ENCODE measurements at regions of chr11 and their contacts with region 1.

Region 1: DNA sequence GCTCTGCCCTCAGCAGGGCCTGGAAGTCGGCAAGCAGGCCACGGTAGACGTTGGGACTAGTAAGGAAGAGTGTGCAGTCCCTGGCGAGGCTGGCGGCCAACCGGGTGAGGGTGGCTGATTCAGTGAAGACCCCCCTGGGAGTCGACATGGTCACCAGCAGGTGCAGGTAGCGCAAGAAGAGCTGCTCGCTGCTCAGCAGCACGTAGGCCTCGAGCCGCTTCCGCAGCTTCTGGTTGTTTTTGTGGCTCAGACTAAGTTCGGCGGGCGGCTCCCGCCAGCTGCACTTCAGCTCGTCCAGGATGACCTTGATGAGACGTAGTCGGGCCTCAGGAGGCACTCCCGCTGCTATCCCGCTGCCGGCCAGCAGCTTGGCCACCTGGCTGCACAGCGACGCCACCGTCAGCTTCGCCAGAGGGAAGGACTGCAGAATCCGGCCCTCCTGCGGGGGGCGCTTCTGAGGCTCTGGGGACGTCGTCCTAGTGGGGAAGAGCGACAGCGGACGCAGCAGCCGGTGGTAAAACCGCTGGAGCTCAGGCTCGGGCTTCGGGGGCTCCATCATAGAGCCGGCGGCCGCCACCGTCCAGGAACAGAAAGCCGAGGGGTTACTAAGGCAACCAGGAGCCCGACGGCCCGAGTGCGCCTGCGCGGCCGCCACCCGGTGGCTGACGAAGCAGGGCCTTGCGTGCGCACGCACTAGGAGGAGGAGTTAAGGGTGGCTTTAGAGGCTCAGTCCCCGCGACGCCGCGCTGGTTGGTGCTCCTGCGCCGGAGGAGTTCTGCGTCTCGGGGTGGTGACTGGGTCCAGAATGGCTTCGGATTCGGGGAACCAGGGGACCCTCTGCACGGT is at the starts of genes CCDC87 and CCS:
- DNase-seq: peak; percentile 85 to 98
- H3K4me3 ChIP-seq: peak within 1 kb of the TSS; percentile 49 to 73 (median 64)
- H3K27ac ChIP-seq: peak within 1 kb of the TSS; percentile 57
- H3K4me1 ChIP-seq: peaks cover 0 to 11% (median 7%) of the 10 kb centered on the region in 4 experiments; a peak in 6 of 7 replicates
- H3K27me3 ChIP-seq: peaks cover 0 to 10% (median 4%) of the 10 kb centered on the region in 4 experiments; a peak in 3 of 7 replicates
- CTCF ChIP-seq: peak; percentile 91 to 99 (median 91)
- EP300 ChIP-seq: 0 out of 3 replicates have a peak, but pooled peaks of 1 of the 2 experiments have one; percentile 14
- POLR2A ChIP-seq: peak; percentile 42 to 79; a peak in 2 of 3 replicates
- RAD21 ChIP-seq: peak; percentile 45 to 68; a peak in 3 of 4 replicates
- total RNA-seq, gene CCDC87: 0.99 and 1.1 TPM in 2 replicates
- total RNA-seq, gene CCS: 35.2 and 37.1 TPM in 2 replicates

Region 2: DNA sequence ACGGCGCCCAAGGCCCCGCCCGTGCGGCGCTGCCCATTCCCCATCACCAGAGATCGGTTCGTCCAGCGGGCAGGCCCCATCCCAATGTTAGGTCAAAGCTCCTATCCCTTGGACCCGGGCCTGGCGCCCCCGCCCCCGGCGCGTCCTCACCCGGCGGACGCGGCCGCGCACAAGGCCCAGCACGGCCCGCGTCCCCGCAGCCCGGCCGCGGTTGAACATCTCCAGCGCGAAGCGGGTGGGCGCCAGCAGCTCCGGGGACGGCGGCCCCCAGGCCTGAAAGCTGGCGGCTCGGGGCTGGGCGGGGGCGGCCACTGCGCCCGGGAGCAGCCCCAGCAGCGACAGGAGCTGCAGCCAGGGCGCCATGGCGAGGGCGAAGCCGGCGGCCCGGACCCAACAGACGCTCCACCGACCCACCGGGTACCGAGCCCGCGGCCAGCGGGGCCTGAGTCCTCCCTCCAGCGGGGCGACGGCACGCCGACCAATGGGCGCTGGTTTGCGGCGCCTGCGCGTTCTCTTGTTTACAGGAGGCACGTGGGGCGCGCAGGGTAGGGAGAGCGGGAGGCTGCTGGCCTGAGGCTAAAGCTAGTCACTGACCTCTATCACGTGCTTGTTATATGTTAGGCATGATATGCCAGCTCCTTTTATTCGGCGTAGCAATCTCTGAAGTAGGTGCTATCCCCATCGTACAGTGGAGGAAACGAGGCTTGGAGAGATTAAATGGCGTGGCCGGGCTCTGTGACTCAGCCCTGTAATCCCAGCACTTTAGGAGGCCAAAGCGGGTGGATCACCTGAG is 24.4 kb before region 1 on chr11 and contains the start of gene CTSF:
- CTCF ChIA-PET with region 1: interaction called, 13 read pairs
- POLR2A ChIA-PET with region 1: interaction called, 10 read pairs
- DNase-seq: no peak
- H3K4me3 ChIP-seq: no peak within 1 kb of the TSS; a peak in 1 of 8 replicates
- H3K27ac ChIP-seq: no peak within 1 kb of the TSS; the same call in 1 of the 2 replicates
- H3K4me1 ChIP-seq: peaks cover 11 to 20% (median 14%) of the 10 kb centered on the region in 4 experiments; a peak in 6 of 7 replicates
- H3K27me3 ChIP-seq: no peaks in the 10 kb centered on the region
- CTCF ChIP-seq: no peak
- EP300 ChIP-seq: no peak
- POLR2A ChIP-seq: no peak
- RAD21 ChIP-seq: no peak
- total RNA-seq, gene CTSF: 0.36 and 0.58 TPM in 2 replicates

Region 3: GRCh38 chr11:66579017-66579606 is 13.6 kb before region 1 on chr11:
- CTCF ChIA-PET with region 1: interaction called, 43 read pairs
- POLR2A ChIA-PET with region 1: interaction called, 17 read pairs
- DNase-seq: peak in 1 of 2 experiments; percentile 97
- H3K4me3 ChIP-seq: no peak overlapping the region
- H3K27ac ChIP-seq: no peak overlapping the region
- H3K4me1 ChIP-seq: peaks cover 0 to 6% (median 4%) of the 10 kb centered on the region in 4 experiments; a peak in 5 of 7 replicates
- H3K27me3 ChIP-seq: peaks cover 0 to 6% (median 1%) of the 10 kb centered on the region in 4 experiments; a peak in 2 of 7 replicates
- CTCF ChIP-seq: peak; percentile 81 to 94 (median 90)
- EP300 ChIP-seq: 0 out of 3 replicates have a peak, but pooled peaks of 1 of the 2 experiments have one; percentile 26
- POLR2A ChIP-seq: no peak
- RAD21 ChIP-seq: peak; percentile 75 to 78

Region 4: GRCh38 chr11:66607126-66607834 is 14.6 kb after region 1 on chr11:
- CTCF ChIA-PET with region 1: interaction called, 15 read pairs
- POLR2A ChIA-PET with region 1: interaction called, 2,165 read pairs
- DNase-seq: no peak
- H3K4me3 ChIP-seq: no peak overlapping the region
- H3K27ac ChIP-seq: no peak overlapping the region
- H3K4me1 ChIP-seq: no peaks in the 10 kb centered on the region
- H3K27me3 ChIP-seq: no peaks in the 10 kb centered on the region
- CTCF ChIP-seq: no peak
- EP300 ChIP-seq: no peak
- POLR2A ChIP-seq: no peak
- RAD21 ChIP-seq: no peak

Region 5: DNA sequence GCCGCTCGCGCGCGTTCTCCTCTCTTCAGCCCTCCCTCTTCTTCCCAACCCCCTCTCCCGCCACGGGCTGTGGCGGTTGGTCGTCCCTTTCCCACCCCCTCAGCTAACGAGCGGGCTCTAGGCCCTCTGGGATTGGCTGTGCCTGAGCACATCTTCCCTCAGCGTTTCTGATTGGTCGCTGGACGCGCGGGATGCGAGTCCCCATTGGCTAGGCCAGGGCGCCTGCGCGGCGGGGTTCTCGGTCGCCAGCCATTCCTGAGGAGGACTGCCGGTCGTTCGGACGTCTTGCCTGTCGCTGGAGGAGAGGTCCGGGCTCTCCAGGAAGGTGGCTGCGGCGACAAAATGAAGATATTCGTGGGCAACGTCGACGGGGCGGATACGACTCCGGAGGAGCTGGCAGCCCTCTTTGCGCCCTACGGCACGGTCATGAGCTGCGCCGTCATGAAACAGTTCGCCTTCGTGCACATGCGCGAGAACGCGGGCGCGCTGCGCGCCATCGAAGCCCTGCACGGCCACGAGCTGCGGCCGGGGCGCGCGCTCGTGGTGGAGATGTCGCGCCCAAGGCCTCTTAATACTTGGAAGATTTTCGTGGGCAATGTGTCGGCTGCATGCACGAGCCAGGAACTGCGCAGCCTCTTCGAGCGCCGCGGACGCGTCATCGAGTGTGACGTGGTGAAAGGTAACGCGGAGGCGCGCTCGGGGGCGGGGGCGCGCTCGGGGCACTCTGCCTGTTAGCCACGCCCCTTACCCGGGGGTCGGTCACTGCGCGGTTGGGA is 23.9 kb after region 1 on chr11 and contains the start of gene RBM14:
- CTCF ChIA-PET with region 1: interaction called, 14 read pairs
- POLR2A ChIA-PET with region 1: interaction called, 2,165 read pairs
- DNase-seq: peak; percentile 96 to 99
- H3K4me3 ChIP-seq: peak within 1 kb of the TSS; percentile 81 to 99 (median 92)
- H3K27ac ChIP-seq: peak within 1 kb of the TSS; percentile 98
- H3K4me1 ChIP-seq: peaks cover 0 to 15% (median 3%) of the 10 kb centered on the region in 4 experiments; a peak in 4 of 7 replicates
- H3K27me3 ChIP-seq: no peaks in the 10 kb centered on the region
- CTCF ChIP-seq: no peak
- EP300 ChIP-seq: no peak
- POLR2A ChIP-seq: peak; percentile 92 to 98
- RAD21 ChIP-seq: no peak
- total RNA-seq, gene RBM14: 142 and 145 TPM in 2 replicates

Region 6: DNA sequence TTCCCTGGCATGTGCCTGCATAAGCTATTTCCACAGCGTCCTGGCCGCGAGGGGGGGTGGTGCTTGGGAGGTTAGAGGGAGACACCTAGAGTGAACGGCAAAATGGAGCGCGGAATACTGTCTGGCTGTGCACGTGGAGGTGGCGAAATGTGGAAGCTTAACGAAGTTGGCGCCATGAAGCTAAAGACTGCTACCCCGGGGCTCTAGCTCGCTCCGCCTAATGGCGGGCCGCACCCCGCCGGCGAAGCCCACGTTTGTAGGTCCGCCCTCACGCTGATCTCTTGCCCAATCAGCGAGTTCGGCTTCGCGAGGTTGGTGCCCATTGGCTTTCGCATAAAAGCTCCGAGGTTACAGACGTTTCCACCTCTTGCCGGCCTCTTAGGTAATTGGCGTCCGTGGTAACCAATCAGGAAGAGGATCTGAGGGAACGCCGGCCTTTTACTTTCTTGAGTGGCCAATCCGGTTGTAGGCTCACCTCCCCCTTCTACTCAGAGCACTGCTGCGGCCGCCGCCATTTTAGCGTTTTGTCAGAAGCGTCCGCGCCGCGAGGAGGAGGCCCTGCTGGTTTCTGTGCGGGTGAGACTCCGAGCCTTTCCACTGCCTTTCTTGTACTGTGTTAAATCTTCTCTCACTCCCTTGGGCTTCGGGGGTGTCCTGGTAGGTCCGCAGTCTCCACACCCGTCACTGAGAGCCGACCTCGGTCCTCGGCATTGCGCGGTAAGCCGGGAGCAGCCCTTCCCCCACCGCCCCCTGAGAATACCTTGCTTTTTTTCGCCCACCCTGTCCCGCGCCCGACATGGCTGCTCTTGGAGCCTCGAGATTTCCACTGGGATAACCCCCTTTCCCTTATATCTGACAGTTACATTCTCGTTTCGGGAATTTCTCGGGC is 45.7 kb after region 1 on chr11 and contains the start of gene RBM4:
- CTCF ChIA-PET with region 1: interaction called, 7 read pairs
- POLR2A ChIA-PET with region 1: interaction called, 2,165 read pairs
- DNase-seq: peak; percentile 94 to 99
- H3K4me3 ChIP-seq: peak within 1 kb of the TSS; percentile 84 to 98 (median 94)
- H3K27ac ChIP-seq: peak within 1 kb of the TSS; percentile 99
- H3K4me1 ChIP-seq: peaks cover 0 to 20% (median 14%) of the 10 kb centered on the region in 4 experiments; a peak in 5 of 7 replicates
- H3K27me3 ChIP-seq: no peaks in the 10 kb centered on the region
- CTCF ChIP-seq: no peak
- EP300 ChIP-seq: 0 out of 3 replicates have a peak, but pooled peaks of 1 of the 2 experiments have one; percentile 21
- POLR2A ChIP-seq: peak; percentile 95 to 99
- RAD21 ChIP-seq: 0 out of 4 replicates have a peak, but pooled peaks of 1 of the 2 experiments have one; percentile 4
- total RNA-seq, gene RBM4: 192 and 201 TPM in 2 replicates

Measured in H1 (cell line).